ENCODE measurements at regions of chr11 and their contacts with region 1.

Region 1: DNA sequence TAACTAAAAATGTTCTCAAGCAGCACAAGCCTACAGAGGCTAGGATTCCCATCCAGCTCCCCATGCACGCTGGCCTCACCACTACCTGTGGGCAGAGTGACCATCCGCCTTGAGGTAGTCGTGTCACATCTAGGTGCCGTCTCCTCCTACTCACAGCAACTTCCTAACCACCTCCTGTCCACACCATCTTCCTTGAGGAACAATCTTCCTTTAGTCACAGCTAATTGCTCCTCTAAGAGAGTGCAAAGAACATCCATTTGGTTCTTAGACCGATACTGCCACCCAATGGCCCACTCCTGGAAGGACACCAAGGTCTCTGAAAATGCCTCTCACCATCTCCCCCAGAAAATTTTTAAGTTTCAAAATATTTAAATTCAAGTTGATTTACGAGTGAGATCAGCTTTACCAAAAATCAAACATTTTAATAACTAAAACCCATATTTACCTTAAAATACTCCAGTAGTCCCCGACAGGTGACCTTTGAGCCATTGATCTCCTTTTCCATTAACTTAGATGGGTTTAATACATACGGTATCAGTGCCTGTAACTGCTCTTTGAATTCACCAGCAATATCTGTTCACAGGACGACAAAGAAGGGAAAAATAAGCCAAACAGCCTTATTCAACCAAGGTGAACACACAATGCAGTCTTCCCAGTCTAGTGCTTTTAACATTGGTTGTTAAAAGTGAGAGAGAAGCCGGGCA is 21.7 kb upstream of the PLAAT3 start:
- DNase-seq: peak; percentile 72 to 82
- H3K4me3 ChIP-seq: no peak overlapping the region
- H3K4me3 Mint-ChIP-seq: no peak overlapping the region
- H3K27ac Mint-ChIP-seq: no peak overlapping the region
- H3K4me1 ChIP-seq: peaks cover 14% of the 10 kb centered on the region; the same call in 1 of the 2 replicates
- H3K4me1 Mint-ChIP-seq: peaks cover 16% of the 10 kb centered on the region
- H3K27me3 ChIP-seq: no peaks in the 10 kb centered on the region
- H3K27me3 Mint-ChIP-seq: no peaks in the 10 kb centered on the region
- CTCF ChIP-seq: peak; percentile 84 to 85

Region 2: GRCh38 chr11:63042596-63042995 is 593.3 kb before region 1 on chr11:
- CTCF ChIA-PET with region 1: no interaction called
- POLR2A ChIA-PET with region 1: no interaction called
- intact Hi-C with region 1: loop called (anchors 5 kb)
- DNase-seq: no peak
- H3K4me3 ChIP-seq: no peak overlapping the region
- H3K4me3 Mint-ChIP-seq: no peak overlapping the region
- H3K27ac Mint-ChIP-seq: no peak overlapping the region
- H3K4me1 ChIP-seq: no peaks in the 10 kb centered on the region
- H3K4me1 Mint-ChIP-seq: no peaks in the 10 kb centered on the region
- H3K27me3 ChIP-seq: no peaks in the 10 kb centered on the region
- H3K27me3 Mint-ChIP-seq: peaks cover 6% of the 10 kb centered on the region
- CTCF ChIP-seq: no peak

Region 3: DNA sequence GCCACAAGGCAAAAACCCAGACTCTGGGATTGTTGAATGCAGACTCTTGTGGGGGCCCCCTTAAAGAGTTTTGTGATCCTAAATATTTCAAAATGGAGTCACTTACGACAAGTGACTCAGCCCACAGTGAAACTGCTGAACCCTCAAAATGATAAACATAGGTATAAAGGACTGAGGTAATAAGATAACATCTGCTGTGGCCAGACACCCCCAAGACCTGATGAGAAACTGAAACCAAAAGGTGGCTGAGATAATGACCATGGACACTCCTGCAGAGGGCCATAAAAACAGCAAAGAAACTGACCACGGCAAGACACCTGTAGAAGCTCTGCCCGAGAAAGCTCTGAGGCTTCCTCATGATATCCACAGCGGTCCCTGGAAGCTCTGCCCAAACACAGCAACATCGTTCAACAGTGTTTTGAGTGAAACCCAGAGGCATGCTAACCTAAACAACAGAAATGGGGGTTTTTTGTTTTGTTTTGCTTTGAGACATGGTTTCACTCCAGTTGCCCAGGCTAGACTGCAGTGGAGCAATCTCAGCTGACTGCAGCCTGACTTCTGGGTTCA is 100.9 kb before region 1 on chr11:
- CTCF ChIA-PET with region 1: no interaction called
- POLR2A ChIA-PET with region 1: no interaction called
- intact Hi-C with region 1: loop called (anchors 5 kb)
- DNase-seq: no peak
- H3K4me3 ChIP-seq: no peak overlapping the region
- H3K4me3 Mint-ChIP-seq: no peak overlapping the region
- H3K27ac Mint-ChIP-seq: no peak overlapping the region
- H3K4me1 ChIP-seq: peaks cover 47% of the 10 kb centered on the region
- H3K4me1 Mint-ChIP-seq: peaks cover 35% of the 10 kb centered on the region
- H3K27me3 ChIP-seq: no peaks in the 10 kb centered on the region
- H3K27me3 Mint-ChIP-seq: no peaks in the 10 kb centered on the region
- CTCF ChIP-seq: no peak

Region 4: GRCh38 chr11:63592975-63593395 is 42.9 kb before region 1 on chr11:
- CTCF ChIA-PET with region 1: interaction called, 10 read pairs
- POLR2A ChIA-PET with region 1: no interaction called
- intact Hi-C with region 1: loop called (anchors 1 kb)
- DNase-seq: peak in 1 of 2 experiments; percentile 67
- H3K4me3 ChIP-seq: no peak overlapping the region
- H3K4me3 Mint-ChIP-seq: no peak overlapping the region
- H3K27ac Mint-ChIP-seq: no peak overlapping the region
- H3K4me1 ChIP-seq: no peaks in the 10 kb centered on the region
- H3K4me1 Mint-ChIP-seq: peaks cover 7% of the 10 kb centered on the region
- H3K27me3 ChIP-seq: no peaks in the 10 kb centered on the region
- H3K27me3 Mint-ChIP-seq: no peaks in the 10 kb centered on the region
- CTCF ChIP-seq: peak; percentile 72 to 95

Region 5: GRCh38 chr11:63621931-63622782 is 13.8 kb before region 1 on chr11:
- CTCF ChIA-PET with region 1: interaction called, 11 read pairs
- POLR2A ChIA-PET with region 1: no interaction called
- intact Hi-C with region 1: no loop called
- DNase-seq: peak; percentile 77 to 86
- H3K4me3 ChIP-seq: no peak overlapping the region
- H3K4me3 Mint-ChIP-seq: no peak overlapping the region
- H3K27ac Mint-ChIP-seq: peak overlapping the region; percentile 69
- H3K4me1 ChIP-seq: peaks cover 53% of the 10 kb centered on the region
- H3K4me1 Mint-ChIP-seq: peaks cover 41% of the 10 kb centered on the region
- H3K27me3 ChIP-seq: no peaks in the 10 kb centered on the region
- H3K27me3 Mint-ChIP-seq: no peaks in the 10 kb centered on the region
- CTCF ChIP-seq: no peak

Region 6: DNA sequence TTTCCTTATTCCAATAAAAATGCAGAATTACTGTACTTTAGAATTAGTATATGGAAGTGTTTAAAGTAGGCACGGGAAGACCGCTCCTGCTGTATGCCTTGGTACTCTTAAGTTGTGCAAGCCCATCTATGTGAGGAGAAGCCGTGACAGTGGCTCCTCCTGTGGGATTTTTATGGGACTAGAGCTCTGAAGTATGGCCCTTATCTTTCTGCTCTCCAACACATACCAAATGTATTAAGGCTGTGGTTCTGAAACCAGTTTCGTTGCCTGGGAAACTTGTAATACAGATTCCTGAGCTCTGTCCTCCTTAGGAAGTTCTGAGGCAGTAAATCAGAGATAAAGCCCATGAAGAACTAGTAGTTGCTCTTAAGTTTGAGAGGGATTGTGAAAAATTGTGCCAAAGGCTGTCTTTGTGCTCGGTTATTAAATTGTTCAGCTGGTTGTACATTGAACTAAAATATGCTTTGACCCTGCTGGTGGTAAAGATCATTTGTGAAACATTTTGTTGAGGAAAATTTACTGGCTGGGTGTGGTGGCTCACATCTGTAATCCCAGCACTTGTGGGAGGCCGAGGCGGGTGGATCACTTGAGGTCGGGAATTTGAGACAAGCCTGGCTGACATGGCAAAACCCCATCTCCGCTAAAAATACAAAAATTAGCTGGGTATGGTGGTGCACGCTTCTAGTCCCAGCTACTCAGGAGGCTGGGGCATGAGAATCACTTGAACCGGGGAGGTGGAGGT is 74.7 kb after region 1 on chr11:
- CTCF ChIA-PET with region 1: interaction called, 7 read pairs
- POLR2A ChIA-PET with region 1: no interaction called
- intact Hi-C with region 1: loop called (anchors 5 kb)
- DNase-seq: peak; percentile 76 to 82
- H3K4me3 ChIP-seq: no peak overlapping the region
- H3K4me3 Mint-ChIP-seq: peak overlapping the region; percentile 64
- H3K27ac Mint-ChIP-seq: peak overlapping the region; percentile 98
- H3K4me1 ChIP-seq: peaks cover 8% of the 10 kb centered on the region
- H3K4me1 Mint-ChIP-seq: peaks cover 17% of the 10 kb centered on the region
- H3K27me3 ChIP-seq: no peaks in the 10 kb centered on the region
- H3K27me3 Mint-ChIP-seq: no peaks in the 10 kb centered on the region
- CTCF ChIP-seq: peak; percentile 41 to 43

Measured in Caco-2 (cell line).